ENCODE measurements at regions of chr14 and their contacts with region 1.

Region 1: DNA sequence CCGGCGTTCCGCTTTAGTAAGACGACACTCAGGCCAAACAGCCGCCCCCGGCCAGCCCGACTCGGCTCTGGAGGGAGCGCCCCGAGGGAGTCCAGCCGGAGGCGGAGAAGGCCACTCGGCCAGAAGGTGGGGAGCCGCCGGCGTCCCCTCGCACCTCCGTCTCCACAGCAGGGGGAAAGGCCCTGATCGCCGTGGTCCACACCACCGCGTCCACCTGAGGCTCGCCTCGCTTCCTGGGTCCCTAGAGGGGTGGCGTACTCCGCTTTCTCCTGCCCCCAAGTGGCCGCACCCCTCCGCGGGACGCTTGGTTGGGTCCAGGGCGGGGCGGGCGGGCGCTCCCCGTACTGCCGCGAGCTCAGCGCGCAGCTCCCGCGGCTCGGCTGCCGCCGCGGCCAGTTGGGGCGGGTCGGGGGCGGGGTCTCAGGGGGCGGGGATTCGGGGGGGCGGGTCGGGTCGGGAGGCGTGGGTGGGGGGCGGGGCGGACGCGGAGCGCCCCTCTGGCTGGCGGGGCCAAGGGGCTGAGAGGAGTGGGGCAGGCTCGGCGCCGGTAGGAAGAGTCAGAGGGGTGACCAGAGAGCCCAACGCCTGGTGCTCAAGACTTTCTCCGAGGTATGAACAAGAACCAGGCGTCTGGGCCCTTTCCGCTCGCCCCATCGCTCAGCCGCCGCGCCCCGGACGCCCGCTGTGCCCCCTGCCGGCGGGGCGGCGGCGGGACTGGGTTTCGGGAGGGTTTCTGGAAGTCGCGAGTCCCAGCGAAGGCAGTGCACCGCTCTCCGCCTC is at the start of gene FRMD6:
- DNase-seq: peak; percentile 89
- H3K4me3 Mint-ChIP-seq: peak within 1 kb of the TSS; percentile 78
- H3K27ac Mint-ChIP-seq: peak within 1 kb of the TSS; percentile 5
- H3K4me1 Mint-ChIP-seq: peaks cover 26% of the 10 kb centered on the region
- H3K27me3 Mint-ChIP-seq: peaks cover 17% of the 10 kb centered on the region
- total RNA-seq, gene FRMD6: 3.2 to 3.4 TPM

Region 2: GRCh38 chr14:51239813-51240803 is 411.5 kb before region 1 on chr14 and contains the start of gene TMX1:
- CTCF ChIA-PET with region 1: interaction called, 4 read pairs
- POLR2A ChIA-PET with region 1: no interaction called
- intact Hi-C with region 1: loop called (anchors 1 kb)
- DNase-seq: peak; percentile 94
- H3K4me3 Mint-ChIP-seq: no peak within 1 kb of the TSS
- H3K27ac Mint-ChIP-seq: no peak within 1 kb of the TSS
- H3K4me1 Mint-ChIP-seq: peaks cover 37% of the 10 kb centered on the region
- H3K27me3 Mint-ChIP-seq: no peaks in the 10 kb centered on the region
- total RNA-seq, gene TMX1: 57.1 to 58.1 TPM

Region 3: DNA sequence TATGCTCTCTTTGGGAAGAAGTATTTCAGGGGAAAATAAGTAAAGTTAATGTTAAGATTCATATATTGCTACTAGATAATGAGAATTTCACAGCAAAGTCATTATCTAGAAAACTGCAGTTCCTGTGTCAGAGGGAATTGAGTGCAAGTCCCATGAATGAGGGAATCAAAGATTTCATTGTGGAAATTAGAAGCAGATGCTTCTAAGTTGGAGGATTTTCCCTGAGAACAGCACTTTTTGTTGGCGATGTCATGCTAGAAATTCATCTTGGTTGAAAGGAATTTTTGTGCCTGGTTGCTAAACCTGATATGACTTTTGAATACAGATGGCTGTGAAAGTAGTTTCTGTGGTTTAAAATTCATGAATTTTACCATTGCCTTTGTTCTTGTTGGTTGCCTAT is 25.7 kb after region 1 on chr14:
- CTCF ChIA-PET with region 1: interaction called, 3 read pairs
- POLR2A ChIA-PET with region 1: interaction called, 3 read pairs
- intact Hi-C with region 1: loop called (anchors 1 kb)
- DNase-seq: no peak
- H3K4me3 Mint-ChIP-seq: no peak overlapping the region
- H3K27ac Mint-ChIP-seq: no peak overlapping the region
- H3K4me1 Mint-ChIP-seq: peaks cover 18% of the 10 kb centered on the region
- H3K27me3 Mint-ChIP-seq: peaks cover 19% of the 10 kb centered on the region

Region 4: GRCh38 chr14:51750542-51750941 is 99.0 kb after region 1 on chr14:
- CTCF ChIA-PET with region 1: interaction called, 10 read pairs
- POLR2A ChIA-PET with region 1: no interaction called
- intact Hi-C with region 1: loop called (anchors 2 kb)
- DNase-seq: no peak
- H3K4me3 Mint-ChIP-seq: no peak overlapping the region
- H3K27ac Mint-ChIP-seq: no peak overlapping the region
- H3K4me1 Mint-ChIP-seq: no peaks in the 10 kb centered on the region
- H3K27me3 Mint-ChIP-seq: peaks cover 15% of the 10 kb centered on the region

Region 5: GRCh38 chr14:51860164-51860824 is 208.7 kb after region 1 on chr14 and contains the start of gene GNG2:
- CTCF ChIA-PET with region 1: interaction called, 4 read pairs
- POLR2A ChIA-PET with region 1: no interaction called
- intact Hi-C with region 1: loop called (anchors 5 kb)
- DNase-seq: peak; percentile 91
- H3K4me3 Mint-ChIP-seq: peak within 1 kb of the TSS; percentile 96
- H3K27ac Mint-ChIP-seq: peak within 1 kb of the TSS; percentile 96
- H3K4me1 Mint-ChIP-seq: peaks cover 52% of the 10 kb centered on the region
- H3K27me3 Mint-ChIP-seq: no peaks in the 10 kb centered on the region
- total RNA-seq, gene GNG2: 146 TPM

Region 6: DNA sequence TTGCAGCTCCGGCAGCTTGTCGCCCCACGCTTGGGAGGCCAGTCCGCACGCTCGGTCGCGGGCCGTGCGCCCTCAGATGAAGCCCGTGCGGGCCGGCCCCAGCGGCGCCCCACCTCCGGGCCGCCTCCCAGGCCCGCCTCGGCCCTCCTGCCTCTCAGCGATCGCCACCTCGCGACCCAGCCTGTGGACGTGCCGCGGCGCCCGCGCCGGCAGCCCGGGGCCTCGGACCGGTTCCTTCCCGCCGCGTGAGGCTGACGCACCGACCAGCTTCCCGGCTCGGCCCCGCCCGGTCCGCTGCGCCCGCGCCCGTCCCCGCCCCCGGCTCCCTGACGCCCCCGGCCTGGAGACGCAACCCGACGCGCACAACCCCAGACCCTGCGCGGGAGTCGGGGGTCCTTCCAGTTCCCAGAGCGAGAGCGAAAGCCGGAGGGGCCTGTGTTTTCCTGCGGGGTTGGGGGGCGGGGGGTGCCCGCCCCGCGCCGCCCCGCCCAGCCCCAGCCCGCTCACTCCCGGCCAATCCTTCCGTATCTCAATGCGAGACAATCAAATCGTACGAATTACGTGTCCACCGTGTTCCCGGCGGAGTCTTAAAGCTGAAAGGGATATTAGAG is 1044.0 kb after region 1 on chr14 and contains the start of gene ERO1A:
- CTCF ChIA-PET with region 1: no interaction called
- POLR2A ChIA-PET with region 1: no interaction called
- intact Hi-C with region 1: loop called (anchors 10 kb)
- DNase-seq: peak; percentile 80
- H3K4me3 Mint-ChIP-seq: peak within 1 kb of the TSS; percentile 100
- H3K27ac Mint-ChIP-seq: peak within 1 kb of the TSS; percentile 99
- H3K4me1 Mint-ChIP-seq: peaks cover 35% of the 10 kb centered on the region
- H3K27me3 Mint-ChIP-seq: no peaks in the 10 kb centered on the region
- total RNA-seq, gene ERO1A: 138 to 153 TPM

Measured in activated CD4-positive, alpha-beta memory T cell treated with anti-CD3 and anti-CD28 coated beads for 36 hours (primary cell).